CD8-positive, alpha-beta T cell (primary cell): ENCODE measurements at regions of chr3 and their contacts with region 1.

Region 1: GRCh38 chr3:62175161-62175560 is 198.2 kb downstream of the FEZF2 start:
- DNase-seq: no peak
- ATAC-seq: no peak
- H3K4me3 ChIP-seq: no peak overlapping the region
- H3K4me3 Mint-ChIP-seq: no peak overlapping the region
- H3K27ac ChIP-seq: no peak overlapping the region
- H3K27ac Mint-ChIP-seq: no peak overlapping the region
- H3K4me1 ChIP-seq: no peaks in the 10 kb centered on the region
- H3K4me1 Mint-ChIP-seq: no peaks in the 10 kb centered on the region
- H3K27me3 ChIP-seq: no peaks in the 10 kb centered on the region
- H3K27me3 Mint-ChIP-seq: peaks cover 6% of the 10 kb centered on the region
- CTCF ChIP-seq: no peak

Region 2: DNA sequence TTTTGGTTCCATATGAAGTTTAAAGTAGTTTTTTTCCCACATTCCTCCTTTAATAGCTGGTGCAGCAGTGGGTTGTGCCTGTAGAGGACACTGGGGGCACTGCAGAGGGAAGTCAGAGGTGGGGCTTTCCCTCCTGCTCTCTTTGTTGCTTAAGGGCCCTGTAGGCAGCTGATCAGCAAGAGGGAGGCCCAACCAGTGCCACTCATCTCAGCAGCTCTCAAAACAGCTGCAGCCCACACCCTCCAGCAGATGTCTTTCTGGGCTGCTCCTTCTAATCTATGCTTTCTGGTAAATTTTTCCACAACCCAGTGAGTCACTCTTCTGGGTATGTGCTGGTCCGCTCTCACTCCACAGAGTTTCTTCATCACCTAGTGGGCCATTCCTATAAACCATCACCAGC is 65.6 kb before region 1 on chr3:
- CTCF ChIA-PET with region 1: no interaction called
- POLR2A ChIA-PET with region 1: no interaction called
- intact Hi-C with region 1: no loop called
- DNase-seq: no peak
- ATAC-seq: no peak
- H3K4me3 ChIP-seq: no peak overlapping the region
- H3K4me3 Mint-ChIP-seq: no peak overlapping the region
- H3K27ac ChIP-seq: no peak overlapping the region
- H3K27ac Mint-ChIP-seq: no peak overlapping the region
- H3K4me1 ChIP-seq: no peaks in the 10 kb centered on the region
- H3K4me1 Mint-ChIP-seq: no peaks in the 10 kb centered on the region
- H3K27me3 ChIP-seq: no peaks in the 10 kb centered on the region
- H3K27me3 Mint-ChIP-seq: no peaks in the 10 kb centered on the region
- CTCF ChIP-seq: no peak

Region 3: DNA sequence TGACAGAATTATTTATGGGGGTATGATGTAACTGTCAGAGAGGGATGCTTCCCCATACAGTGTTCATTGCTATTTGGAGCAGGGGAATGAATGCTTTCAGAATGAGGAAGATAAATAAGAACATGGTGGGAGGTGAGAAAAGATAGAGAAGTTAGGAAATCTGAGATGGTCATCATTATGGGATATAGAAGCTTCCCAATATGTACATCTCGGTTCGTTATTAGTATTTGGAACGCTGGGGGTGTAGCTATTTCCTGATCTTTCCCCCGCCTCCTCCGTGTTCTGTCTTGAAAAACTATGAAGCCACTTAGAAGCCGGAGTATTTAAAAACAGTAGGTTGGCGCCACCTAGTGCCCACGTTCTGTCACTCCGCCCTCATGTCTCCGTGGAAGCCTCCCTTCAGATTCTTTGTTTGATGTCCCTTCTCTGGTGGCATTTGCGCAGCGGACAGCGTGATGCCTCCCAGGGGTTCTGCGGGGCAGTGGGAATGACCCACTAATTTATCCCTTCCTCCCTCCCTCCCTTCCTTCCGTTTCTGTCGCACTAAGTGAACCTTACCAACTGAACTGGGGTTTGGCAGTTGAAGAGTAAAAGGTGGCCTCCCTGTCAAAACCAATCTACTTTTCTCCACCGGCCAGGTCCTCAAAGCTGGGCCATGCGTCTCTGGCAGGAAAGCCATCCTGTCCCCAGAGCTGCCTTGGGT is 13.7 kb after region 1 on chr3:
- CTCF ChIA-PET with region 1: interaction called, 19 read pairs
- POLR2A ChIA-PET with region 1: no interaction called
- intact Hi-C with region 1: no loop called
- DNase-seq: peak; percentile 10 to 72 (median 62)
- ATAC-seq: peak; percentile 51
- H3K4me3 ChIP-seq: no peak overlapping the region
- H3K4me3 Mint-ChIP-seq: no peak overlapping the region
- H3K27ac ChIP-seq: no peak overlapping the region
- H3K27ac Mint-ChIP-seq: no peak overlapping the region
- H3K4me1 ChIP-seq: no peaks in the 10 kb centered on the region
- H3K4me1 Mint-ChIP-seq: peaks cover 7% of the 10 kb centered on the region
- H3K27me3 ChIP-seq: no peaks in the 10 kb centered on the region
- H3K27me3 Mint-ChIP-seq: peaks cover 1% of the 10 kb centered on the region
- CTCF ChIP-seq: peak; percentile 68